ENCODE measurements at regions of chr7 and their contacts with region 1.

Region 1: GRCh38 chr7:121369462-121369861 is 26.6 kb downstream of the FAM3C start:
- DNase-seq: no peak
- H3K4me3 ChIP-seq: no peak overlapping the region
- H3K27ac ChIP-seq: no peak overlapping the region
- H3K4me1 ChIP-seq: peaks cover 4 to 5% of the 10 kb centered on the region in 2 donors
- H3K27me3 ChIP-seq: no peaks in the 10 kb centered on the region
- CTCF ChIP-seq: no peak
- POLR2A ChIP-seq: no peak

Region 2: GRCh38 chr7:121069346-121070100 is 299.9 kb before region 1 on chr7:
- intact Hi-C with region 1: no loop called
- DNase-seq: no peak
- H3K4me3 ChIP-seq: no peak overlapping the region
- H3K27ac ChIP-seq: no peak overlapping the region
- H3K4me1 ChIP-seq: no peaks in the 10 kb centered on the region
- H3K27me3 ChIP-seq: no peaks in the 10 kb centered on the region
- CTCF ChIP-seq: no peak
- POLR2A ChIP-seq: no peak

Region 3: DNA sequence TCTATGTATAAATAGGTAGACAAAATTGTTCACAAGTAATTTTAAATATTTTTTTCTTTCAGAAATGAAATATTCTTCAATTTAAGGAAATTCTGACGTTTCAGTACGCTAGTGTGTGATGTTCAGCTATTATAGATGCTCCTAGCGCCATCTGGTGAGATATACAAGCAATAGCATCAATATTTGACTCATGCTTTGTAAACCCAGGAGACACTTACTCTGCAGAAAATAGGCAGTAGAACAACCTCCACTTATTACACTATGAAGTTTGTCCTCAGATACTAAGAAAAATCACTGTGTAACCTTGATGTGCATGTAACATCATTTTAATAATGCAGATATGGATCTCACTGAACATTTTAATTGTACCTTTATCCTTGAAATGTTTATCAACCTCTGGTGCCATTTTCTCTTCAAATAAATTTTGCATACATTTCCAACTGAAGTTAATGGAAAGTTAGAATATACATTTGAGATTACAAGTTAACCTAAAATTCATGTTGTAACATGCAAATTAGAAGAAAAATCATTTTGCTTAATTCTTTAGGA is 178.2 kb after region 1 on chr7:
- intact Hi-C with region 1: loop called (anchors 2 kb)
- DNase-seq: no peak
- H3K4me3 ChIP-seq: no peak overlapping the region
- H3K27ac ChIP-seq: no peak overlapping the region
- H3K4me1 ChIP-seq: no peaks in the 10 kb centered on the region
- H3K27me3 ChIP-seq: no peaks in the 10 kb centered on the region
- CTCF ChIP-seq: peak; percentile 20 to 86 (median 70)
- POLR2A ChIP-seq: no peak